ENCODE measurements at regions of chr4 and their contacts with region 1.

Region 1: DNA sequence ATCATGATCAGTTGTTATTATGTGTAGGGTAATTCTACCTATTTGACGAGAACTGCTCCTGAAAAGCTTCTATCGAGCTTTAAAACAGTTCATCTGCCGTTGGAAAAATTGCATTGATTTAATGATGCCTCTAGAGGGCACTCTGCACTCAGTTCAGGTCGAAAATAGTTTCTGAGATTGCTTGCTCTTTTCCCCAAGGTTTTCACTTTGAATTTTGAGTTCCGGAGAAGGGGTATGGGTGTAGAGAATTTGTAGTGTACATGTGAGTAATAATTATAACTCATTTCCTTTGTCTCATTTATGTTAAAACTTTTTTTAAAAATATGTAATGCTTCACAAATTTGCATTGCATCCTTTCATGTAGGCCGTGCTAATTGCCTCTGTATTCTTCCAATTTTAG is 28.4 kb upstream of the TNIP3 start:
- DNase-seq: no peak

Region 2: DNA sequence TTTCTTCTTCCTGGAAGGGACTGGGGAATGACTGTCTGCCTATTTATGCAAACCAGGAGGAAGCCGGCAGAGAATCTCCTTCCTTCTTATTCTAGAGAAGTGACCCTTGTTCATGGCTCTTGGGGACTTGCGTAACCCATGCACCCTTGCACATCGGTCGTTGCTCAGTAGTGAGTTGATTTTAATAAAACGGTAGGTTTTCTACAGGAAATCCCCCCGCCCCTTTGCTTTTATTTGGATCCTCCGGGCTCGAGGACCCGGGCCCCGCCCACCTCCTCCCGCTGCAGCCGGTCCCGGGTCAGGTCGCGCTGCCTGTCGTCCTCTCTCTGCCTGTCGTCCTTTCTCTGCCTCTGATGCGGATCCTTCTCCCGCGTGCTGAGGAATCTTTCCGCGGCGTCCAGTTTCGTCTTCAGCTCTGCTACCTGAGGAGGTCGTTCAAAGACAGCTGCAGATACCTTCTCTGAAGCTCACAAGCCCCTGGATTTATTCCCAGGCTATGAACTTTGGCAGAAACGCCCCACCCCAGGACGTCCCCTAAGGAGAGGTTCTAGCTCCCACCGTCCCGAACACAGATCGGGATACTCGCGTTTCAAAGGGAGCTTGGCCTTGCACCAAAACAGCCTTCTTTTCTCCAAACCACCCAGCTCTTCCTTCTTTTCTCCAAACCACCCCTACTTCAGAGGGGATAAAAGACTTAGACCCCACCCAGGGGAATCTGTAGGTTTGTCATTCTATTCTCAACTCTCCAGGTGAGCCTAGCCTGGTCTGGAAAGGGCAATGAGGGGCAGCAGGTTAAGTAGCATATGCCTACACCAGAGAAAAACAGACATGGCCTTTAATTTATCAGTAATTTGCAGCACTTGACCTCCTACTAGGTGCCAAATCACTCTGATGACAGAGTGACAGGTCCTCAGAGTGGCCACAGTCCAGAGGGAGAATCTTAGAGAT is 35.4 kb before region 1 on chr4:
- intact Hi-C with region 1: no loop called
- DNase-seq: no peak

Region 3: GRCh38 chr4:121252224-121252806 is 59.8 kb after region 1 on chr4:
- intact Hi-C with region 1: loop called (anchors 2 kb)
- DNase-seq: no peak

Region 4: GRCh38 chr4:121344098-121344497 is 151.6 kb after region 1 on chr4:
- intact Hi-C with region 1: no loop called
- DNase-seq: no peak